Cardiac septum (tissue), 1 donor: ENCODE measurements at regions of chr18 and their contacts with region 1.

Region 1: GRCh38 chr18:46173393-46174341 is 69.5 kb downstream of the HAUS1 start:
- DNase-seq: peak; percentile 98

Region 2: GRCh38 chr18:46148810-46149209 is 24.9 kb before region 1 on chr18:
- intact Hi-C with region 1: loop called (anchors 1 kb)
- DNase-seq: peak; percentile 35

Region 3: DNA sequence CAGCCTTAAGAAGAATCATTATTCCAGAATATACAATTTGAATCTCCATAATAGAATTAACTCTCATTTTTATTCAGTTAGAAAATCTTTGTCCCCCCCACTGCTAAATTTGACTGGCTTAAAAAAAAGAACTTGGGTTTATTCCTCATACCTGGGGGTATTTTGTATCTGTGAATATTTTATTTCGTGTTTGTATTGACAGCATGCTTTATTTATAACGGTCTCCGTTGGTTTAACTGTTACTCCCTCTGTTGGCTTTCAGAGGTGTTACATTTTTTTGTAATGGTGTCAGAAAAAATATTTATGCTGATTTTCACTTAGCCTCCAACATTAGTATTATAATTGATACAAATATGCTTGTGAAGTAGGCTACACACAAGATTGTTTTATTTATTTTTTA is 39.6 kb after region 1 on chr18:
- intact Hi-C with region 1: loop called (anchors 2 kb)
- DNase-seq: no peak

Region 4: GRCh38 chr18:46281185-46282176 is 107.8 kb after region 1 on chr18:
- intact Hi-C with region 1: loop called (anchors 5 kb)
- DNase-seq: no peak

Region 5: GRCh38 chr18:46411867-46412690 is 238.4 kb after region 1 on chr18:
- intact Hi-C with region 1: loop called (anchors 10 kb)
- DNase-seq: no peak

Region 6: DNA sequence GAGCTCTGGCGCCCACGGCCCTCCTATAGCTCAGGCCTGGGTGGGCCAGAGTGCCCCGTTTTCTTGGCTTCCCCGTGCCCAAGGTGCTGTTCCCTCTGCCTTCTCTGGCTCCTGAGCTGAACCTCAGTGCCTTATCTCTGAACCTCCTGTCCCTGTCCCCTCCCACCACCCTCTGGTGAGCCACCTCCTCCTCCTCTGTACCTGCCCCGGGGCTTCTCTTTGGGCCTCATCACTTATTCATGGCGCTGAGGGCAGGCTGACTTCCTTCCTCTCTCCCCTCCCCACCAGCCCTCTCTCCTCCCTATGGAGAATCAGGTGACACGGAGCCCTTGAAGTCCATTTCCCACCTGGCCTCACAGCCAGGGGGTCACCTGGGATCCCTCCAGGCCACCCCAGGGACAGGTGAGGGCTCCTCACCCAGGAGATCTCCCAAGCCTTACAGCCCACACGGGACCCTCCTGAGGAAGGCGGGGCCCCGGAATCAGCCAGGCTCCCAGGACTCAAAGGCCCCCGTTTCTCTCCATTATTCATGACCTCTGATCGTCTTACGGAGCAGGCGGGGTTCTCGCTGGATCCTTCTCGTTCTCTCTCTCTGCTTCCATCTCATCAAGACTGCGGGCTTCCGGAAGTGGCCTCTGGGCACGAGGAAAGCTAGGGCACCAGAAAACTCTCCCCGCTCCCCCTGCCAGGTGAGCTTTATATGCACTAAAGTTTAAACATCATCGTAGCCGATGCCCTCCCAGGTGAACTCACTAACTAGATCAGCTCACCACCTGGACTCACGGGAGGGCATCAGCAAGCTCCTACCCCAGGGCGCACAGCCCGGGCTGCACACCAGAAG is 483.7 kb after region 1 on chr18 and contains the start of gene LOXHD1:
- intact Hi-C with region 1: loop called (anchors 5 kb)
- DNase-seq: peak; percentile 59
- total RNA-seq, gene LOXHD1: 0.48 TPM